ENCODE measurements at regions of chr5 and their contacts with region 1.

Region 1: DNA sequence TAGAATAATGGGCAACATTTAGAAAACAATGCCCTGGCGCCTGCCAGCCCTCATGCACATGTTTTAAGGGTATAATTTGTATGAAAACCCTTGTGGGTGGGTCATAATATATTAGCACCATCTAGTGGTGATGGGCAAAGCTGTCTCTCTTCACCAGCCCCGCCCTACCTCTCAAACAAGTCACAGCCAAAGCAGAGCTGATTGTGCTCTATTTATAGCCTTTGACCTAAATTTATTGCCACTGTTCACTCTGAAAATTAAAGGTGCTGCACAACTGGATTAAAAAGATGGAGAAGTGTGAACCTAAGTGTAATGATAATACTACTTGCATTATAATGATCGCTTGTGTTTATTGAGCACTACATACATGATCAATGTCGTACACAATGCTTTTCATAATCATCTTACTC is 131.9 kb upstream of the ANKH start:
- DNase-seq: peak; percentile 32 to 88 (median 73)

Region 2: DNA sequence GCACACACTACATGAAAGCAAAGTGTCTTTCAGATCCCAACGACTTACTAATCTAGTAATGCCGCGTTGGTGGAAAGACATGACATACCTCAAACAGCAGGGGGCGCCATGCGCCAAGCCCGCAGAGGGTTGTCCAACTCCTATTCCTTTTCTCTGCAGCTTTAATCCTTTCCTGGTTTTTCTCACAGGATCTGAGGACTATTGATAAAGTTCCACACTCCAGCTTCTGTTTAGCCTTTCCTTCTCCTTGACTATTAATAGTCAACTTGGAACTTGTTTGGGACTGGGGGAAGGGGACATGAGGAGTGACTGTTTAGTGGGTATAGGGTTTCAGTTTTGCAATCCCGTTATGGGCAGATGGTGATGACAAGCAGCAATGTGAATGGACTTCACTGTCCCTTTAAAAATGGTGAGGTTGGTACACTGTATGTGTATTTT is 276.1 kb before region 1 on chr5:
- intact Hi-C with region 1: loop called (anchors 2 kb)
- DNase-seq: peak; percentile 68 to 96 (median 91)

Region 3: GRCh38 chr5:15203376-15203775 is 199.9 kb after region 1 on chr5:
- intact Hi-C with region 1: no loop called
- DNase-seq: no peak

Region 4: GRCh38 chr5:15417156-15417555 is 413.6 kb after region 1 on chr5:
- intact Hi-C with region 1: no loop called
- DNase-seq: no peak